ENCODE measurements at regions of chr2 and their contacts with region 1.

Region 1: GRCh38 chr2:168118733-168119514 is 128.5 kb downstream of the STK39 start:
- DNase-seq: no peak
- ATAC-seq: peak; percentile 71
- H3K4me3 Mint-ChIP-seq: no peak overlapping the region
- H3K27ac Mint-ChIP-seq: no peak overlapping the region
- H3K4me1 Mint-ChIP-seq: no peaks in the 10 kb centered on the region
- H3K27me3 Mint-ChIP-seq: no peaks in the 10 kb centered on the region
- CTCF ChIP-seq: peak; percentile 52

Region 2: DNA sequence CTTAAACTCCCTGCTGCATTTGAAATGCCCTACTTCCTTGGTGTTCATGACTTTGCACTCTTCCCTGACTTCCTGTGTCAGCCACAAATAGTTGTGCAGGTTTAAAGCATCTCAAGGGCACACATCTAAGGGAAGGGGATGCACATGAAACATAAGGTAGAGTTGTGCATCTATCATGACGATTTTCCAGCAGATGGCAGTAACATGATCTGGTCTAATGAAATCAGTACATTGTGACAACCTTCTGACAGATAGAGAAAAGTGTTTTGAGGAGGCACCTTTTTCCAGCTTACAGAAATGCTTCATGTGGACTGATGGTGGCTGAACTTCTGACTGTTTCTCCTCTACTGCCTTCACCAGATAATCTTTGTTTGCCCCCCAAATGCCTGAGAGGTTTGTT is 991.8 kb before region 1 on chr2:
- CTCF ChIA-PET with region 1: interaction called, 3 read pairs
- POLR2A ChIA-PET with region 1: no interaction called
- intact Hi-C with region 1: loop called (anchors 1 kb)
- DNase-seq: no peak
- ATAC-seq: no peak
- H3K4me3 Mint-ChIP-seq: no peak overlapping the region
- H3K27ac Mint-ChIP-seq: no peak overlapping the region
- H3K4me1 Mint-ChIP-seq: no peaks in the 10 kb centered on the region
- H3K27me3 Mint-ChIP-seq: no peaks in the 10 kb centered on the region
- CTCF ChIP-seq: no peak

Region 3: GRCh38 chr2:167292430-167293171 is 826.3 kb before region 1 on chr2:
- CTCF ChIA-PET with region 1: interaction called, 3 read pairs
- POLR2A ChIA-PET with region 1: no interaction called
- intact Hi-C with region 1: loop called (anchors 10 kb)
- DNase-seq: peak; percentile 38
- ATAC-seq: peak; percentile 95
- H3K4me3 Mint-ChIP-seq: peak within 1 kb of the TSS; percentile 76
- H3K27ac Mint-ChIP-seq: no peak within 1 kb of the TSS
- H3K4me1 Mint-ChIP-seq: peaks cover 17% of the 10 kb centered on the region
- H3K27me3 Mint-ChIP-seq: peaks cover 28% of the 10 kb centered on the region
- CTCF ChIP-seq: no peak

Region 4: DNA sequence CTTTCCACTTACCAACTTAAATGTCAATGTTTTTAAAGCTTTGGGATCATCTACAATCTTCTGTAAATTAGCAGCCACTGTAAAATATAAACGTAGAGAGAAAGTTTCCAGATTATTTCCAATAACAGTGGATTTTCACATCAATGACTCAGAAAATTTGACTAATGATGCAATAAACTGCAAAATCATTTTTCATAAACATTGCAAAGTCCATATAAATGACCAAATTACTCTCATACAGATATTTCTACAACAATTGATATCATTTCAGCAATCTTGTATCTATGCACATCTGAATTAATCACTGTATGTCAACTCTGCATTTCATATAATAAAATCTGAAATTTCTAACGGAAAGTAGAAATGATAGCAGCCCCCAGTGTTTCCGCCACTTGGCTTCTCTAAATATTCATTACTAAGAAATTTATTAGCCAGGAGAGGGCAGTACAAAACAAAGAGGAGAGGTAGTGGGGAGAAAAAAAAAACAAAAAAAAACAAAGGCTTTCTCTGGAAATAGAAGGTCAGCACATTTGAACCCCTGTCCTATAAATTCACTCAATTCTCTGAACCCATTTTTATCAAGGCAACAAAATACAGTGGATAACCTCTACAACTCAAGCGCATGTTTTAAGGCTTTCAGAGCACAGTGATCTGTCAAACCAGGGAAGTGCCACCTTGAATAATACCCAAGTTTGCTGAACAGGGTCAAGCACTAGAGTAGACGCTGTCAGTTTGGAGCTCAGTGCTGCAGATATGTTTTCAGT is 154.1 kb before region 1 on chr2:
- CTCF ChIA-PET with region 1: interaction called, 178 read pairs
- POLR2A ChIA-PET with region 1: no interaction called
- intact Hi-C with region 1: loop called (anchors 1 kb)
- DNase-seq: no peak
- ATAC-seq: no peak
- H3K4me3 Mint-ChIP-seq: no peak overlapping the region
- H3K27ac Mint-ChIP-seq: no peak overlapping the region
- H3K4me1 Mint-ChIP-seq: peaks cover 20% of the 10 kb centered on the region
- H3K27me3 Mint-ChIP-seq: no peaks in the 10 kb centered on the region
- CTCF ChIP-seq: no peak

Region 5: GRCh38 chr2:168130346-168130745 is 11.4 kb after region 1 on chr2:
- CTCF ChIA-PET with region 1: interaction called, 14 read pairs
- POLR2A ChIA-PET with region 1: no interaction called
- intact Hi-C with region 1: no loop called
- DNase-seq: no peak
- ATAC-seq: no peak
- H3K4me3 Mint-ChIP-seq: no peak overlapping the region
- H3K27ac Mint-ChIP-seq: no peak overlapping the region
- H3K4me1 Mint-ChIP-seq: peaks cover 3% of the 10 kb centered on the region
- H3K27me3 Mint-ChIP-seq: no peaks in the 10 kb centered on the region
- CTCF ChIP-seq: no peak